ENCODE measurements at regions of chr16 and their contacts with region 1.

Region 1: DNA sequence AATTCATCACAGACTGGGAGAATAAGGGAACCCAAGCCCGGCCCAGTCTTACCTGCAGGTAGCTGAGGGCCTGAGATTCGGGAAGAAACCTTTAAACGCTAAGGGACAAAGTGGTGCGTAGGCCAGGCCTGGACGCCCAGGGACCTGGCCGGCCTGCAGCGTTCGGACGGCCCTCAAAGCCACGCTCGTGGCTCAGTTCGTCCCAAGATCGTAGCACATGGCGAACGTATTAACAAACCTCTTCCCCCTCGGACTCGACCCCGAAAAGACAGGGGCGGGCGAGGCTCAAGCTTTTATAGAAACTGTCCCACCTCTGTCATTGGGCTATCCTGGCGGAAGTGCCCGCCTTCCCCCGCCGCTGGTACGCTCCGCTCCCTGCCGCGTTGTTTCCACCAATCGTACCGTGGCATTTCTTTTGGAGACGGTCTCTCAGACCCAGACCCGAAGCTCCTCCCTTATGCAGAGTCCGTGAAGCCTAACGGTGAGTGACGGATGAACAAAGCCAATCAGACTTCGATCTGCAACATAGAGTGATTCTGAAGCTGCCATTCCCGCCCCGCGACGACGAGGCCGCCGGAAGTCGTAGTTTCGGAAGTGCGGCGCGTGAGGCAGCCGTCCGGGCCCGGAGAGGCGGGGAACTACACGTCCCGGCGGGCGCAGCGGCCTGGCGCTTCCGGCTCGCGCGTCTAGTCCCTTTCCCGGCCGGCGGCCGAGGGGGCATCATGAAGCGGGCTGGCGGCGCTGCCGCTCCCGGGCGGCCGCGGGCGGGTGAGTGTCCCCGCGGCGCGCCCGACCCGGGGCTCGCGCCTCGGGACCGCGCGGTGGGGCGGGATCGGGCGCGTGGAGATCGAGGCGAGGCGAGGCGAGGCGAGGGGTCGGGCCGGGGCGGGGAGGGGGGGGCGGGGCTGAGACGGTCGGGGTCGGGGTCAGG is at the start of gene TRAF7:
- DNase-seq: peak; percentile 96

Region 2: DNA sequence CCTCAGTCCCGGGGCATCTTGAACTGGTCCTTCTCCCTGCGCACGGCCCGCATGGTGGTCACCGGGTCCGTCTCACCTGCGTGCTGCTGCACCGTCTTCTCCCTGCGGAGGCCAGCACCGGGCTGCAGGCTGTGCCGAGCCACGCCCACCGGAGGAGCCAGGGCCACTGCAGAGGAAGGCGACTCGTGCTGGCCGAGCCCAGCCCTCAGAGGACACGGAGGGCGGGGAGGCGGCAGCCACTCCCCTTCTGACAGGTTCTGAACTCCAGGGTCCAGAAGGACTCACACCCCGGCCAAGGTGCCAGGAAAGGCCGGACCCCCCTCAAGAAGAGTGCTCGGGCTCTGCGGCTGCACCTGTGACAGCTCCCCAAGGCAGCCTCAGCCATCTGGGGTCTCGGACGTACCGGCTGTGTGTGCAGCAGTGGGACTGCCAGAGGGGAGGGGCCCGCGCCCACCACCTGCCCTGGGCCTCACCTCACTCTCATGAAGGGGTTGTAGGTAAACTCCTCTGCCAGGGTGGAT is 346.0 kb before region 1 on chr16:
- CTCF ChIA-PET with region 1: no interaction called
- POLR2A ChIA-PET with region 1: no interaction called
- DNase-seq: no peak

Region 3: GRCh38 chr16:1959269-1960049 is 195.9 kb before region 1 on chr16 and contains the start of gene NDUFB10:
- CTCF ChIA-PET with region 1: no interaction called
- POLR2A ChIA-PET with region 1: interaction called, 10 read pairs
- DNase-seq: peak; percentile 92

Region 4: DNA sequence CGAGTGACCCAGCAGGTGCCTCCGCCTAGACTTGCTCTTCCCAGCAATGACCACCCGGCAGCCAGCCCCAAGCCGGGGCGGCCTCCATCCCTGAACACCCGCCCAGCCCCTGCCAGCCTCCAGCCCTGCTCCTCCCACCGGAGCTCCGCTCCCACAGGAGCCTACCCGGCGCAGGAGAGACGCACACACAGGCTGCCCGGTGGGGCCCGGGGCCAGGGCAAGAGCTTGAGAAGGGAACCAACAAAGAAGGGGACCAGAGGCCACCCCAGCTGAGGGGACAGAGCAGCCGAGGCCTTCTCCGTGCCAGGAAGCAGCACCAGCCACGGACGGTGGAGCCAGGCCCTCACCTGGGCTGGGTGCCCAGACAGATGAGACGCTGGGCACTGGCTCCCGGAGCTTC is 33.5 kb before region 1 on chr16:
- CTCF ChIA-PET with region 1: interaction called, 9 read pairs
- POLR2A ChIA-PET with region 1: interaction called, 10 read pairs
- DNase-seq: no peak

Region 5: DNA sequence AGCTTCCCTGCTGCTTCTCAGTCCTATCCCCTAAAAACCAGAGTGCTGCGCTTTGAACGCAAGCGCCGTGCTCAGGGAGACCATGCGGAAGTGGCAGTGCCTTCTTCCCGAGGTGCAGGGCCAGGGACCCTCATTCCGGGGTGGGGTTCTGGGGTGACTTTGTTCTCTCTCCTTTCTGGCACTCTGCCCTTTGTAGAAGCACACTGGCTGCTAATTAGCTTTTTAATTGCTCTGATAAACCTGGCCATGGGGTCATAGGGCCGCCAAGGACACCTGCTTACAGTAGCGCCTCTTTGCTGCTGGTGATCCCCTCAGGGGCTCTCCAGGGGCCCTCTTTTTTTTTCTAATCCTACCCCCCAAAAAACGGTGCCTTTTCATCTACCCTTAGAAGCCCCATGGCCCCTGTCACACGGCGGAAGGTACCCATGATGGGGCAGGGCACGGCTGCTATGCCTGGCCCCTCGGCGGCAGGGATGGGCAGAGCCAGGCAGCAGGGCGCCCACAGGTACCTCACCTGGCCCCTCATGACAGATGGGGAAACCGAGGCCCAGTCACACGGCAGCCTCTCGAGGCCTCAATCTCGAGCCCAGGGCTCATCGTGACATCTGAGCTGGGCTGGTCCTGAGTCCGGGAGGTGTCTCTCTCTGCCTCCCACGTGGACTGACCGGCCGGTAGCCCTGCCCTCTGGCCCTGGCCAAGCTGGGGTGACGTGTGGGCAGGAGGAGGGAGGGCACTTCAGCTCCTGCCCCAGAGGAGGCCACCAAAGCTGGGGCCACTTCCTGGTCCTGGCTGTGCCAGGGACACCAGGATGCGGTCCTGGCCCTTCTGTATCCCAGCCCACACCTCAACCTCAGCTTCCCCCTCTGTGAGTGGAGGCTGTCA is 11.6 kb after region 1 on chr16:
- CTCF ChIA-PET with region 1: no interaction called
- POLR2A ChIA-PET with region 1: interaction called, 27 read pairs
- DNase-seq: no peak

Region 6: GRCh38 chr16:2194852-2195321 is 39.5 kb after region 1 on chr16:
- CTCF ChIA-PET with region 1: no interaction called
- POLR2A ChIA-PET with region 1: interaction called, 17 read pairs
- DNase-seq: peak; percentile 55

Region 7: DNA sequence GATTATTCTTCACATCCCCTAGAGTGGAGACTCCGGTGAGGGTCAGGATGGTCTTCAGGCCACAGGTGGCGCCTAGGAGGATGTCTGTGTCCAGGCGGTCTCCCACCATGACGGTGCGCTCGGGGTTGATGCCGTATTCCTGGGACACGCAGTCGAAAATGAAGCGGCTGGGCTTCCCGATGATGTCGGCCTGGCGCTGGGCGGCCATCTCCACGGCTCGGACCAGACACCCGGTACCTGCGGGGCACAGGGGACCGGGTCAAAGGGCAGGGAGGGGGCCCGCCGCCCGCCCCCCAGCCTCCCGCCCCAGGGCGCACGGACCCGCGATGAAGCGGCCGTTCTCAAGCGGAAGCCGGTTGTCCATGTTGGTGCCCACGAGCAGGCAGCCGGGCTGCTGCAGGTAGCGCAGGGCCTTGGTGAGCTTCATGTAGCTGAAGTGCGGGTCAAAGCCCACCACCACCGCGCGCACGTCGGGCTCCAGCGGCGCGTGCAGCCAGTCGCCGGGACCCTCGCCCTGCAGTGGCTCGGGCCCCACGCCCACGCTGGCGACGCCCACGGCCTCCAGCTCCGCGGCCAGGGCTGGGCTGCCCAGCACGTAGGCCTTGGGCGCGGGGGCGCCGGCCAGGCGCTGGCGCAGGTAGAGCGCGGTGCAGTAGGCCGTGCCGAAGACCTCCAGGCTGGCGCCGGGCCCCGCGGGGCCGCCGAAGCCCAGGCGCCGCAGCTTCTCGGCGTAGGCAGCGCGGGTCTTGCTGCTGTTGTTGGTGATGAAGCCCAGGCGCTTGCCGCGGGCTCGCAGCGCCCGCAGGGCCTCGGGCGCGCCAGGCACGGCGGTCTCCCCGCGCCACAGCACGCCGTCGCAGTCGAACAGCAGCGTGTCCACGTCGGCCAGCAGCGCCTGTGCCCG is 58.7 kb after region 1 on chr16:
- CTCF ChIA-PET with region 1: interaction called, 3 read pairs
- POLR2A ChIA-PET with region 1: interaction called, 16 read pairs
- DNase-seq: no peak